ENCODE measurements at regions of chr7 and their contacts with region 1.

Region 1: DNA sequence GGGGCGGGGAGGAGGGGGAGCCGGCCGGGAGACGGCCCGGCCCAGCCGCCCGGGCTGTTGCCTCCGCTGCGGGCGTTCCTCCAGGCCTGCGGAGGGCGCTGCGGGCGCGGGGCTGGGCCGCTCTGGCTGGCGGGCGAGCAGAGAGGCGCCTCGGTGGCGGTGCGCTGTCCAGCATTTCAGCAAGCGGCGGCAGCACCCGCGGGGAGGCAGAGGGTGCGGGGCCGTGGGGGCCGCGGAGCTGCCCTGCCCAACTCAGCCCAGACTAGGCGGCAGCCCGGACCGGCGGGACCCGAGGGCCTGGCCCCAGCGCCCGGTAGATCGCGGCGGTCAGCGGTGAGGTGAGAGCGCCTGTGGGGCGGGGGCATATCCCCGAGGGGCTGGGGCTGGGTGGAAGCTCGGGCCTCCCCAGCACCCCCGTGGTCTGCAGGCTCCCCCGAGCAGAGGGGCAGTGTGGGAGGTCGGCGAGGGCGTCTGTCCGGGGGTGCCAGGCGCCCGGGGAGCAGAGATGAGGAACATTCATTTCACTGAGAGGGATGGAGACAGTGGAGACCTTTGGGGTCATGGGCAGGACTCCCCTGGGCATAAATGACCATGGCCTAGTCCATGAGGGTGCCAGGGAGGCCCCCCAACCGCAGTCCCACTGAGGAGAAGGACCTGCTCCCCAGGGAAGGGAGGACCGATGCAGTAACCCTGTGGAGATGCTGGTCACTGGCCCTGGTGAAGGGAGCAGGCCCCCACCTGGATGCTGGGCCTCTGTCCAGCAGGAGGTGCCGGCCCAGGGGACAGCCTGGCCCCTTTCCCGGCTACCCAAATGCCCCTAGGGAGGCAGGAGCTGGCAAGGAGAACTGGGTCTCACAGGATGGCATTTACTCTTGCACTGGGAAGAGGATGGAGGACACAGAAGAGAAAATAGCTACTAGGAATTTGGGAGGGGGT is at the start of gene SRRM3:
- DNase-seq: no peak
- H3K4me3 ChIP-seq: no peak within 1 kb of the TSS
- H3K27ac ChIP-seq: no peak within 1 kb of the TSS
- H3K4me1 ChIP-seq: no peaks in the 10 kb centered on the region
- H3K27me3 ChIP-seq: peaks cover 3% of the 10 kb centered on the region
- CTCF ChIP-seq: peak; percentile 36 to 94 (median 63)
- polyA plus RNA-seq, gene SRRM3: 0.30 to 0.52 TPM (median 0.46 TPM) in 3 replicates

Region 2: DNA sequence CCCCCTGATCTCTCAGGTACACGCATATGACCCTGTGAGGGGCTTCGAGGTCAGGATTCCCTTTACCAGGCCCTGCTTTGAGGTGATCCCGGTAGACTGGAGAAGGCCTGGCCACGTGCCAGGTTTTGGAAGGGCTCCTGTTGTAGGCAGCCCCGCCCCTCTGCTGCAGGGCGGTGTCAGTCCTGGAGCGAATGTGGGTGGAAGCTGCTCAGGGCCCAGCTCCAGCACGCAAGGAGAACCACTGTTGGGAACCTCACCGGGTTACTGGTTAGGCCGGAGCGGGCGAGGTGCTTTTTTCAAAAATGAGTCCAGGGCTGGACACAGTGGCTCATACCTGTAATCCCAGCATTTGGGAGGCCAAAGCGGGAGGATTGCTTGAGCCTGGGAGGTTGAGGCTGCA is 138.4 kb before region 1 on chr7:
- dilution Hi-C with region 1: no loop called
- DNase-seq: no peak
- H3K4me3 ChIP-seq: no peak overlapping the region
- H3K27ac ChIP-seq: no peak overlapping the region
- H3K4me1 ChIP-seq: peaks cover 9% of the 10 kb centered on the region
- H3K27me3 ChIP-seq: no peaks in the 10 kb centered on the region
- CTCF ChIP-seq: no peak

Region 3: DNA sequence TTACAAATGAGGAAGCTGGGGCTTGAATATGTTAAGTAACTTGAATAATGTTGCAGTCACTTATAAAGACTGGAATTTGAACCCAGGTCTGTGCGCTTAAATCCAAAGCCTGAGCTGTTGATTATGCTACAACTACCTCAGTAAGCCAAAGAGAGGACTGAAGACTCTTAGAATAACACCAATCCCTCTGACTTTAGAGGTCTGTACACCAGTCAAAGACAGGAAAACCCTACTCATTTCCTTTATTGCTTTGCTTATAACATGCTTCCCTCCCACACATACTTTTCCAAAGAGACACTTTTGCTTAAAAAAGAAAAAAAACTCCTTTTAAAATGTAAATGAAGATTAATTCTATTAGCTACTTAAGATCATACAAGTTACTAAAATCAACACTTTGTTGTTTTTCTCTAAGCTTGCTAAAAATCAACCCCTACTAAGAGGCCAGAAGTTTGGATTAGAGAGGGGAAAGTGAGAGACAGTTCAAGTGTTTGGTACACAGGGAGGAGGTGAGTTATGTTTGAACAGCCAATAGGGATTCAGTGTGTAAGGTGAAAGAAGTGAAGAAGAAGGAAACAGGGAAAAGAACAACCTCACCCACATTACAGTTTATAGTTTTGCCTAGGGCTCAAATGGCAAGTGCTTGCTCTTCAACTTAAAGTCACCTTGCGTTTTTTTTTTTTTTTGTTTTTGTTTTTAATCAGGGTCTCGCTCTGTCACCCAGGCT is 79.3 kb before region 1 on chr7:
- dilution Hi-C with region 1: no loop called
- DNase-seq: no peak
- H3K4me3 ChIP-seq: no peak overlapping the region
- H3K27ac ChIP-seq: no peak overlapping the region
- H3K4me1 ChIP-seq: no peaks in the 10 kb centered on the region
- H3K27me3 ChIP-seq: no peaks in the 10 kb centered on the region
- CTCF ChIP-seq: no peak

Region 4: DNA sequence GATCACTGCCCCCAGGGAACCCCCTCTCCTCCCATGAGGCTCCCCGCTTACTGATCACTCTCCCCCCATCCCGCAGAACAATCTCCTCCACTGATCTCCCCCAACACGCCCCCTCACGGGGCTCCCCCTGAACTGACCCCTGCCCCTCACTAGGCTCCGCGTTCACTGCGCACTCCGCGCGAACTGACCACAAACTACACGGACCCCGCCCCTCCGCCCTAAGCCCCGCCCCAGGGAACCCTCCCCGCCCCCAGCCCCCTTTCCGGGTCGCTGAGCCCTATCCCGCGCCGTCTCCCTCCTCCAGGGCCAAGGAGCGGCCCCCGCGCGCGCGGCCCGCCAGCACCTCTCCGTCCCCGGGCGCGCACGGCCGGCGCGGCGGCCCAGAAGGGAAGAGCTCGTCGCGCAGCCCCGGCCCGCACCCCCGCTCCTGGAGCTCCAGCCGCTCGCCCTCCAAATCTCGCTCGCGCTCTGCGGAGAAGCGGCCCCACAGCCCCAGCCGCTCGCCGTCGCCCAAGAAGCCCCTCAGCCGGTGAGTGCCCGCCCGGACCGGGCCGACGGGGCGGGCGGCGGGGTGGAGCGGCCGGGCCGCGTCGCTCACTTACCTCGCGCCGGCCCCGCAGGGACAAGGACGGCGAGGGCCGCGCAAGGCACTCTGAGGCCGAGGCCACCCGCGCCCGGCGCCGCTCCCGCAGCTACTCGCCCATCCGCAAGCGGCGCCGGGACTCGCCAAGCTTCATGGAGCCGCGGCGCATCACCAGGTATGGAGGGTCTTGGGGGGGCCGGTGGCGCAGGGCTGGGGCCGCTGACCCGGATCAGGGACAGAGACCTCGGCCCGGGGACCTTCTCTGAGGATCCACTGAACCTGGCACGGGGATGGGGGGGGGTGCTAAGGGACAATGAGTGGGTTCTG is 80.6 kb after region 1 on chr7:
- dilution Hi-C with region 1: loop called (anchors 10 kb)
- DNase-seq: no peak
- H3K4me3 ChIP-seq: peak overlapping the region in 2 of 3 experiments; percentile 29 to 55
- H3K27ac ChIP-seq: no peak overlapping the region
- H3K4me1 ChIP-seq: peaks cover 2% of the 10 kb centered on the region
- H3K27me3 ChIP-seq: peaks cover 38% of the 10 kb centered on the region
- CTCF ChIP-seq: no peak

Region 5: GRCh38 chr7:76359111-76359978 is 157.3 kb after region 1 on chr7:
- dilution Hi-C with region 1: no loop called
- DNase-seq: peak; percentile 96
- H3K4me3 ChIP-seq: peak overlapping the region; percentile 96 to 100 (median 99)
- H3K27ac ChIP-seq: peak overlapping the region; percentile 87
- H3K4me1 ChIP-seq: peaks cover 35% of the 10 kb centered on the region
- H3K27me3 ChIP-seq: no peaks in the 10 kb centered on the region
- CTCF ChIP-seq: peak; percentile 65 to 82 (median 80)